ENCODE measurements at regions of chr6 and their contacts with region 1.

Region 1: DNA sequence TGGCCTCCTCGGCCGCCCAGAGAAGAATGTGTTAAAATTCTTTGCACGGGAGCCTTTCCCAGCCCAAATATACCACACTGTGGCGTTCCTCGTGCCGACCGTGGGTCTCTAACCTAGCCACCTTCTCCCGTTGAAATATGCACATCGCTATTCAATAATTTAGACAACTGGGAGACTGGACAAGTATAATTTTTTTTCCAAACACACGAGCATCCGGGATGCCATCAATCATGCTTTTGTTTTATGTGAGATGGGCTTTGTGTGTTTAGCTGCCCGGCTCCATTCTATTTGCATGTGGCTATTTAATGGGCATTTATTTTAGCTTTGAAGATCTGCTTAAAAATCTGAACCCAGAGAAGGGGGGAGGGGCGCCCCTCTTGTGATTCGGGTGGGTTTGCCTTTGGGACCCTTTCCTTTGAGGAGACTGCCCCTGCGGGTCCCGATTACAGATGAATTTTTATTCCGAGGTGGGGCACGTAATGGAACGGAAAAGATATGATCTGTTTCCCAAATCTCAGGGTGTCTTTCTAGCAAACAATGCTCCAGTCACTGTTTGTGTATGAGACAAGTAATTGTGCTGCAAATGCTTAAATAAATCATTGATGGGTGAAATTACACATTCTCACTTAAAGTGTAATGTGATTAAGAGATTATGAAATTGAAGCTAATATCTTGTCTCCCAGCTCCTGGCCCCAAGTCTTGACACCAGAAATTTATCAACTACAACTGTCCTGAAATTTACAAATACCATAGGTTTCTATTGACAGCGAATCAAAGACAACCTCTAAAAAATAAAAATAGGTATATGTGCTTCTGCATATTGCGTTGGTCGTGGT is 30.9 kb downstream of the TFAP2A start:
- DNase-seq: no peak
- H3K4me3 Mint-ChIP-seq: no peak overlapping the region
- H3K27ac Mint-ChIP-seq: peak overlapping the region; percentile 82
- H3K4me1 Mint-ChIP-seq: peaks cover 7% of the 10 kb centered on the region
- H3K27me3 Mint-ChIP-seq: peaks cover 69% of the 10 kb centered on the region

Region 2: GRCh38 chr6:10395171-10395941 is 11.4 kb after region 1 on chr6:
- intact Hi-C with region 1: loop called (anchors 1 kb)
- DNase-seq: no peak
- H3K4me3 Mint-ChIP-seq: no peak overlapping the region
- H3K27ac Mint-ChIP-seq: no peak overlapping the region
- H3K4me1 Mint-ChIP-seq: no peaks in the 10 kb centered on the region
- H3K27me3 Mint-ChIP-seq: peaks cover 84% of the 10 kb centered on the region

Region 3: GRCh38 chr6:10411971-10412745 is 28.2 kb after region 1 on chr6:
- intact Hi-C with region 1: loop called (anchors 2 kb)
- DNase-seq: peak; percentile 38
- H3K4me3 Mint-ChIP-seq: peak overlapping the region; percentile 80
- H3K27ac Mint-ChIP-seq: peak overlapping the region; percentile 42
- H3K4me1 Mint-ChIP-seq: peaks cover 42% of the 10 kb centered on the region
- H3K27me3 Mint-ChIP-seq: peaks cover 91% of the 10 kb centered on the region

Region 4: DNA sequence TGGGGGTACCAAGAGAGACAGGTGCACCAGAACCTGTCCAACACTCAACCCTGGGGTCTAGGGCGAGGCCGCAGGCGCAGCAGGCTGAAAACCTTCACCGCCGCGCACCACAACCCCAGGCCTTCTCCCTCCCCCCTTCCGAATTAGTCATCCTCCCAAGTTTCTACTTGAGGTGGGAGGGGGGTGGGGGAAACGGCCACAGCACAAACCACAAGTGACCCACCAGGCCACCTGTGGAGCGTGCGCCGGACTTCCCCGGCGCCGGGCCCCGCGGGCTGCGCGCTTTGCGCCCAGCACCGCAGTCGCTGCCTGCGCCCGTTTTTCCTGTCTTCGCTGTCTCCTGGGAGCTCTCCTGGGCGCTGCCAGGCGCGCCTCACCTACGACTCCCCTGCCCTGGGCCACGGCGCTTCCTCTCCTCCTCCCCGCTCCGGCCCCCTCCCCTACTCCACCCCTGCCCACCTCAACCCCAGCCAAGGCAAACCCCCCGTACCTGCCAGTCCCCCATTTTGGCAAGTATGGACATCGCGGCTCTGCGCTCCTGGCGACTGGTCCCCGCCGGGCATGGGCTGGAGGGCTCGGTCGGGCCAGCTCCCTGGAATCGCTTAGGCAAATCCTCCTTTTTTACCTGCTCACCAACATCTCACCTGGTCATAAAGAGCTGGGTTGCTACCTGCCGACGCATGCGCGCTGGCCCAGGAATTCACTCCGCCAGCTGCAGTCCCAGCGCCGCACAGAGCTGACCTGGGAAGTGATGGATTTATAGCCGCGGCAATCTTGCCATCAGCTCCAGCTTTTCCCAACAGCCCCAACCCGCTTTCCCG is 35.1 kb after region 1 on chr6:
- intact Hi-C with region 1: loop called (anchors 2 kb)
- DNase-seq: no peak
- H3K4me3 Mint-ChIP-seq: no peak overlapping the region
- H3K27ac Mint-ChIP-seq: peak overlapping the region; percentile 44
- H3K4me1 Mint-ChIP-seq: peaks cover 1% of the 10 kb centered on the region
- H3K27me3 Mint-ChIP-seq: peaks cover 85% of the 10 kb centered on the region

Region 5: DNA sequence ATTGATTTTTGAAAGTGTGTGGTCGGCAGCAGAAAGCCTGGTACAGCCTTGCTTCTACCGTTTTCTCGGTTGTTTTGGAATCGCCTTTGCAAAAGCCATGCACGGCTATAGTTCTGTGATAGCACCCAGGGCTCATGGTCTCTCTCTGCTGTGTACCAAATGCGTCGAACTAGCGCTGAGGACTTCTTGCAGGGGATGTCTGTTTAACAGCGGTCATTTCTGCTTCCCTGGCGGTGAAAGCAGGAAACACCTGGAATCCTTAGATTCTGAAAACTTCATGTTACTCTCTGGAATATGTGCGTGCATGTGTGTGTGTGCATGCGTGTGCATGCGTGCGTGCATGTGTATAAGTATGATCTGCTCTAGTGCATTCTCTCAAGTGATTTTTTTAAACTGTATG is 111.0 kb after region 1 on chr6:
- intact Hi-C with region 1: no loop called
- DNase-seq: no peak
- H3K4me3 Mint-ChIP-seq: no peak overlapping the region
- H3K27ac Mint-ChIP-seq: no peak overlapping the region
- H3K4me1 Mint-ChIP-seq: no peaks in the 10 kb centered on the region
- H3K27me3 Mint-ChIP-seq: peaks cover 20% of the 10 kb centered on the region

Region 6: DNA sequence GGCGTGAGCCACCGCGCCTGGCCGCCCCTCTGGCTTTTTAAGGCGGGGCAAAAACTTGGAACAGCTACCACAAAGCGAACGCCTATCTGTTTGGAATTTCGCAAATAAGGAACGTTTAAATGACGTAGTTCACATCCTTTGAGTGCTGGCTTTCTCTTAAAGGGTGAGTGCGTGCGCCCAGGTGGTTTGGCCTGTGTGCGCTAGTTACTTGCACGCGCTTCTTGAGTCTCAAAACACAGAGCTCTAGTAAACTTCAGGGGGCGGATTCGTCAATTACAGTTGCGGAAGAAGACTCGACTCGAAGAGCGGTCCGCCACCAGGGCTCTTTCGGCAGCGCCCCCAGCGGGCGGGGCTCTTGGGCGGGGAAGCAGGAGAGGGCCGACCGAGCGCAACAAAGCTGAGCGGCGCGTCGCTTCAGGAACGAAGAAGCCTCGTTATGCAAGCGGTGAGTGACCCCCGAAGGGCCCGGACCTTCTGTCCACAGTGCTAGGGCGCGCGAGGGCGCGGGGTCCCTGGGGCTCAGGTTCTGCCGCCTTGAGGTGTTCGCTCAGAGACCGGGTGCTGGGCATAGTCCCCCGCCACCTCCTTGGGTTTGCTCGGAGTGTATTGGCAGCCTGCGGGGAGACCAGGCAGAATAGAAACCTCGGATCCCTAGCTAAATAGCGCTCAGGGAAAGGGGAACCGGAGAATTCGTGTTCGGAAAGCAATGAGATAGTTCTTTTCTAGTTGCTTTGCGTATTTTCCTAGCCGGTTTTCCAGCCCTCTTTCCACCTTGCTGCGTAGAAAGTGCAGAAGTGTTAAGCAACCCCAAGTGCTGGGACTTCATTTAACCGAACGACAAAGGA is 502.9 kb after region 1 on chr6 and contains the start of gene SYCP2L:
- intact Hi-C with region 1: loop called (anchors 5 kb)
- DNase-seq: no peak
- H3K4me3 Mint-ChIP-seq: no peak within 1 kb of the TSS
- H3K27ac Mint-ChIP-seq: no peak within 1 kb of the TSS
- H3K4me1 Mint-ChIP-seq: no peaks in the 10 kb centered on the region
- H3K27me3 Mint-ChIP-seq: peaks cover 63% of the 10 kb centered on the region
- total RNA-seq, gene SYCP2L: not detected in 2 replicates